Testis (tissue), 5 donors: ENCODE measurements at regions of chr16 and their contacts with region 1.

Region 1: GRCh38 chr16:10729104-10730048 is 14.3 kb upstream of the NUBP1 start:
- DNase-seq: peak; percentile 59
- H3K4me3 ChIP-seq: no peak overlapping the region
- H3K27ac ChIP-seq: no peak overlapping the region
- H3K4me1 ChIP-seq: peaks cover 5% of the 10 kb centered on the region
- H3K27me3 ChIP-seq: no peaks in the 10 kb centered on the region
- CTCF ChIP-seq: no peak
- POLR2A ChIP-seq: no peak

Region 2: DNA sequence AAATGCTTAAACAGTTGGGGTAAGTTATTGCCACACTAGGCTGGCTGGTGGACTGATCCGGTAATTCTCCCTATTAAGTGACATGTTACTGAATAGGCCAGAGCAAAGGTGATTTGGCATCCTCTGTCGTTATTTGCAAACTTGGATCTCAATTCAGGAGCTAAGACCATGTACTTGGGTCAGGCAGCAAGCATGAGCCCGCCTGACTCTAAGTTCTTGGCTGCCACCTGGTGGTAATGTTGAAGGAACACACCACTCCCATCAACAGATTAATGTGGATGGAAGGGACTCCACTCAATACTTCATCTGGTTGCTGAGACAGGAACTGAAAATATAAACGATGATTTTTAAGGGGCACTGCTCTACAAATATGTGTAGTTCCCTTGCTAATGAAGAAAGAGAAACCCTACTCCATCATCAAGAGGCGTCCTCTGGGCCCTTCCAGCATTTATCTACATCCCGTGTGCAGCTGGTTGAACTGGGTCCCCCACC is 219.8 kb before region 1 on chr16:
- intact Hi-C with region 1: loop called (anchors 5 kb)
- DNase-seq: peak; percentile 81
- H3K4me3 ChIP-seq: no peak overlapping the region
- H3K27ac ChIP-seq: no peak overlapping the region
- H3K4me1 ChIP-seq: peaks cover 5% of the 10 kb centered on the region
- H3K27me3 ChIP-seq: no peaks in the 10 kb centered on the region
- CTCF ChIP-seq: peak; percentile 81 to 90 (median 87)
- POLR2A ChIP-seq: no peak

Region 3: GRCh38 chr16:10616730-10617555 is 112.4 kb before region 1 on chr16:
- intact Hi-C with region 1: no loop called
- DNase-seq: no peak
- H3K4me3 ChIP-seq: no peak overlapping the region
- H3K27ac ChIP-seq: peak overlapping the region in 1 of 2 donors; percentile 14
- H3K4me1 ChIP-seq: peaks cover 7% of the 10 kb centered on the region
- H3K27me3 ChIP-seq: no peaks in the 10 kb centered on the region
- CTCF ChIP-seq: no peak
- POLR2A ChIP-seq: no peak

Region 4: GRCh38 chr16:10876799-10877341 is 147.5 kb after region 1 on chr16 and contains the start of gene CIITA:
- intact Hi-C with region 1: no loop called
- DNase-seq: peak; percentile 75
- H3K4me3 ChIP-seq: no peak within 1 kb of the TSS
- H3K27ac ChIP-seq: no peak within 1 kb of the TSS
- H3K4me1 ChIP-seq: peaks cover 3% of the 10 kb centered on the region
- H3K27me3 ChIP-seq: no peaks in the 10 kb centered on the region
- CTCF ChIP-seq: no peak
- POLR2A ChIP-seq: no peak
- total RNA-seq, gene CIITA: 6.3 to 16.0 TPM

Region 5: GRCh38 chr16:10949370-10949970 is 220.1 kb after region 1 on chr16:
- intact Hi-C with region 1: no loop called
- DNase-seq: no peak
- H3K4me3 ChIP-seq: no peak overlapping the region
- H3K27ac ChIP-seq: no peak overlapping the region
- H3K4me1 ChIP-seq: peaks cover 34% of the 10 kb centered on the region
- H3K27me3 ChIP-seq: no peaks in the 10 kb centered on the region
- CTCF ChIP-seq: no peak
- POLR2A ChIP-seq: no peak